MCF 10A (cell line): ENCODE measurements at regions of chr17 and their contacts with region 1.

Region 1: GRCh38 chr17:66673668-66674315 is 161.1 kb upstream of the CACNG5 start:
- DNase-seq: peak; percentile 83
- H3K4me3 Mint-ChIP-seq: peak overlapping the region; percentile 56
- H3K27ac Mint-ChIP-seq: peak overlapping the region; percentile 92
- H3K4me1 Mint-ChIP-seq: peaks cover 46% of the 10 kb centered on the region
- H3K27me3 Mint-ChIP-seq: no peaks in the 10 kb centered on the region
- CTCF ChIP-seq: peak; percentile 85

Region 2: GRCh38 chr17:66255112-66255511 is 418.7 kb before region 1 on chr17:
- CTCF ChIA-PET with region 1: interaction called, 4 read pairs
- POLR2A ChIA-PET with region 1: interaction called, 4 read pairs
- intact Hi-C with region 1: loop called (anchors 1 kb)
- DNase-seq: peak; percentile 82
- H3K4me3 Mint-ChIP-seq: no peak overlapping the region
- H3K27ac Mint-ChIP-seq: no peak overlapping the region
- H3K4me1 Mint-ChIP-seq: no peaks in the 10 kb centered on the region
- H3K27me3 Mint-ChIP-seq: no peaks in the 10 kb centered on the region
- CTCF ChIP-seq: peak; percentile 72

Region 3: GRCh38 chr17:66466840-66467367 is 206.9 kb before region 1 on chr17:
- CTCF ChIA-PET with region 1: no interaction called
- POLR2A ChIA-PET with region 1: interaction called, 4 read pairs
- intact Hi-C with region 1: loop called (anchors 2 kb)
- DNase-seq: peak; percentile 96
- H3K4me3 Mint-ChIP-seq: peak overlapping the region; percentile 70
- H3K27ac Mint-ChIP-seq: peak overlapping the region; percentile 84
- H3K4me1 Mint-ChIP-seq: peaks cover 33% of the 10 kb centered on the region
- H3K27me3 Mint-ChIP-seq: no peaks in the 10 kb centered on the region
- CTCF ChIP-seq: no peak

Region 4: DNA sequence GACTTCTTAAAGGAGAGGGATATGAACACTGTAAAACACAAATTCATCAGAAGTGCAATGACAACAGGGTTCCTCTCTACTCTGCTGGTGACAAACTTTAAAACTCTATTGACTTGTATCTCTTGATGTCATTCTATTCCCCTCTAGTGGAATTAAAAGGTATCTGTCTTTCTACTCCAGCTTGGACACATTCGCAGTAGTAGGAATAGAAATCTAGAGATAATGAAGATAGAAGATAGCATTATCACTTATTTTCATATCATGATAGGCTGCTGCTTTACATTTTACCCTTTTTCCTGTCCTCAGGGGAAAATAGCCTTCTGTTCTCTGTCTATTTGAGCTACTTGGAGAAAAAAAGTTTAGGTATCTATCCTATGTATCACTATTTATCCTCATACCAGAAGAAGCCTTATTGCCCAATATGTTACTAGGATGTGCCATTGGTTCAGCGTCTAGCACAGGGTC is 48.4 kb before region 1 on chr17:
- CTCF ChIA-PET with region 1: interaction called, 5 read pairs
- POLR2A ChIA-PET with region 1: no interaction called
- intact Hi-C with region 1: loop called (anchors 1 kb)
- DNase-seq: peak; percentile 33
- H3K4me3 Mint-ChIP-seq: no peak overlapping the region
- H3K27ac Mint-ChIP-seq: no peak overlapping the region
- H3K4me1 Mint-ChIP-seq: no peaks in the 10 kb centered on the region
- H3K27me3 Mint-ChIP-seq: no peaks in the 10 kb centered on the region
- CTCF ChIP-seq: peak; percentile 51

Region 5: DNA sequence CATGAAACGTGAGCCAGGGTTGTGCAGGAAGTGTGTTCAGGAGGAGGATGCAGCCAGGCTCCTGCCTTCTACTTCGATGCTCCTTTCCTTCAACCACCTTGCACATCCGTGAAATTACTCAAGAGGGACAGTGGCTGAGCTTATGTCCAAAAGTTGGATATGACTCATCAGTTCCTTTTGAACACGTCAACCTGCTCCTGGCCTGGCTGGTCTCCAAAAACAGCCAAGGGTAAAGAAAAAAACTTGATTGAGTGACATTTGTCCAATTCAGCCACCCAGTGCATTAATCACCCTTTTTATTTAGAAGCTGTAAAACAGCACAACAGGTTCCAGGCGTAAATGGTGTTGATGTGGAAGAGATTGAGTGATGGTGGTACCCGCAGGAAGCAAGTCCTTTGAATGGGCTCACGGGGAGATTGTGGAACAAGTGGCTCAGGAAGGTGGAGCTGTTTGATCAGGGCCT is 12.4 kb before region 1 on chr17:
- CTCF ChIA-PET with region 1: interaction called, 8 read pairs
- POLR2A ChIA-PET with region 1: interaction called, 39 read pairs
- intact Hi-C with region 1: no loop called
- DNase-seq: peak; percentile 98
- H3K4me3 Mint-ChIP-seq: no peak overlapping the region
- H3K27ac Mint-ChIP-seq: peak overlapping the region; percentile 76
- H3K4me1 Mint-ChIP-seq: peaks cover 17% of the 10 kb centered on the region
- H3K27me3 Mint-ChIP-seq: no peaks in the 10 kb centered on the region
- CTCF ChIP-seq: no peak

Region 6: GRCh38 chr17:66689221-66689620 is 15.4 kb after region 1 on chr17:
- CTCF ChIA-PET with region 1: no interaction called
- POLR2A ChIA-PET with region 1: no interaction called
- intact Hi-C with region 1: no loop called
- DNase-seq: no peak
- H3K4me3 Mint-ChIP-seq: no peak overlapping the region
- H3K27ac Mint-ChIP-seq: no peak overlapping the region
- H3K4me1 Mint-ChIP-seq: no peaks in the 10 kb centered on the region
- H3K27me3 Mint-ChIP-seq: no peaks in the 10 kb centered on the region
- CTCF ChIP-seq: no peak